GM23248 (cell line): ENCODE measurements at regions of chr11 and their contacts with region 1.

Region 1: DNA sequence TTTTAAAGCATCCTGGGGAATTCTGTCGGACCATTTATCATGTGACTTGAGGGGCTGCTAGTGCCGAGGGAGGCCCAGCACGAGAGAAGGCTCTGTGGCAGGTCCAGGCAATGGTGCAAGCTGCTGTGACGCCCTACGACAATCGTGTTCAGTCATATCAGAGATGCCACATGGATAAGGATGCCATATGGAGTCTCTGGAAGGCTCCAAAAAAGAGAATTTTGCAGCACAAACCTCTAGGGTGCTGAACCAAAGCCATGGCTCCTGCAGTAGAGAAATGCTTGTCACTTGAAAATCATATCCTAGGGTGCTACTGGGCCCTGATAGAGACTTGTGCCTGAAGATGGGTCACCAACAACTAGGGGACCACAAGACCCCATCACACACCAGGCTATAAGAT is 6.7 kb upstream of the CD6 start:
- DNase-seq: no peak
- H3K4me3 ChIP-seq: no peak overlapping the region
- H3K27ac ChIP-seq: no peak overlapping the region
- H3K4me1 ChIP-seq: no peaks in the 10 kb centered on the region
- H3K27me3 ChIP-seq: peaks cover 67% of the 10 kb centered on the region

Region 2: DNA sequence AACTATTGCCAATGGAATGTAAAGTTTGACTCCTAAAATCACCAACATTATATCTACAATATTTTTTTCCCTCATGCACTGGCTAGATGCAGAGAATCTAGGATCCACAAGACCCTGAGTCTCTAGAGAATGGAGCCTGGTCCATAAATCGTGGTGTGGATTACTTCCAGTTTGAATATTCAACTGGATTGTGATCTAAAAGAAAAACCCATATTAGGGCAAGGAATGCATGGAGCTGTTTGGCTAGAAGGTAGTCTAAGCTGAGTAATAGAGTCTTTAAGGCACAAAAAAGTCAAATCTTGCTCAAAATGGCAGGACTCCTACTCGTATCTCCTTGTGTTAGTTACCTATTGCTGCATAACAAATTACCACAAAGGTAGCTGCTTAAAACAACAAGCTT is 544.8 kb before region 1 on chr11:
- in situ Hi-C with region 1: no loop called
- DNase-seq: no peak
- H3K4me3 ChIP-seq: no peak overlapping the region
- H3K27ac ChIP-seq: no peak overlapping the region
- H3K4me1 ChIP-seq: no peaks in the 10 kb centered on the region
- H3K27me3 ChIP-seq: no peaks in the 10 kb centered on the region

Region 3: DNA sequence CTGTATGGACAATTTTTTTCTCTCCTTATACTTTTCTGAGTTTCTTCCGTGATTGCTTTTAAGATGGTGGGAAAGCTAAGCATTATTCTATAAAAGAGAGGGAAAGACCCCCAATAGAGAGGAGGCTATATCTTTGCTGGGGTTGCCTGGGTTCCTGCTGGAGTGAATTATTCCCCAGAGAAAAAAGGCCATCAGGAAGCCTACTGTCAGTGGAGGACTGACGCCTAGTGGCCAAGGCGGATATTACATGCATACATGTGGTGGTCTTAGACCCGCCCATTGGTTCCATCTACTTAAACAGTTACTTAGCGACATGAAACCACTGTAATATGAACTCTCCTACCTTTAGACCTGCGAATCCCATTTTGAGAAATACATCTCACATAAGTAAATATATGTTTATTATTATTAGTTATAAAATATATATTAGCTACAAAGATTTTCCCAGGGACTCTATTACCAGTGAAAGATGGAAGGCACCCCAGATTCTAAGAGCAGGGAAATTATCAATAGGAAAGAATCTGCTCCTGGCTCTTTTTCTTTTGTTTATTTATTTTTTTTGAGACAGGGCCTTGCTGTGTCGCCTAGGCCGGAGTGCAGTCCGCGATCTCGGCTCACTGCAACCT is 222.8 kb after region 1 on chr11:
- in situ Hi-C with region 1: loop called (anchors 10 kb)
- DNase-seq: peak; percentile 80
- H3K4me3 ChIP-seq: no peak overlapping the region
- H3K27ac ChIP-seq: no peak overlapping the region
- H3K4me1 ChIP-seq: no peaks in the 10 kb centered on the region
- H3K27me3 ChIP-seq: no peaks in the 10 kb centered on the region